ENCODE measurements at regions of chr9 and their contacts with region 1.

Region 1: DNA sequence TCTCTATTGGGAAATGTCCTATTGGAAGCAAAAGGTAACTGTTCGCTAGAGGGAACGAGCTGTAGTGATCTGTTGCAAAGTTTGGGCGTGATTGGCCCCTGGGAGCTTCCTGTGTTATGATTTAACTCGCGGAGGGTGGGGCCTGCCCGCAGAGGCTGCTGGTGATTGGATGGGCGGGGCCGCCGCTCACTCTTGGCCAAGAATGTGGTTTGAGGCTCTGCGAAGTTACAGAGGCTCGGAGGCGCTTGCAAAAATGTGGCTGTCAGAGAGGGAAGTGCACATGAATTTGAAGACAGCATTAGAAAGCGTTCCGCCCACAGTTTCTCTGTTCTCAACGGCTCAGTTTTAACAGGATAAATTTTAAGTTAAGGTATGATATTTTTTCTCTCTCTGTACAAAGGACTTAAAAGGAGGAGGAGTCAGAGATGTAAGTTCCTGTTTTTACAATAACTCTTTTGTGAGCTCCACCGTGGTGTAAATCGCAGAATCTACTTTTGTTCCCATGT is 46.9 kb downstream of the CNTRL start:
- DNase-seq: peak; percentile 97
- H3K4me3 Mint-ChIP-seq: peak overlapping the region; percentile 68
- H3K27ac Mint-ChIP-seq: peak overlapping the region; percentile 80
- H3K4me1 Mint-ChIP-seq: peaks cover 44% of the 10 kb centered on the region
- H3K27me3 Mint-ChIP-seq: no peaks in the 10 kb centered on the region

Region 2: DNA sequence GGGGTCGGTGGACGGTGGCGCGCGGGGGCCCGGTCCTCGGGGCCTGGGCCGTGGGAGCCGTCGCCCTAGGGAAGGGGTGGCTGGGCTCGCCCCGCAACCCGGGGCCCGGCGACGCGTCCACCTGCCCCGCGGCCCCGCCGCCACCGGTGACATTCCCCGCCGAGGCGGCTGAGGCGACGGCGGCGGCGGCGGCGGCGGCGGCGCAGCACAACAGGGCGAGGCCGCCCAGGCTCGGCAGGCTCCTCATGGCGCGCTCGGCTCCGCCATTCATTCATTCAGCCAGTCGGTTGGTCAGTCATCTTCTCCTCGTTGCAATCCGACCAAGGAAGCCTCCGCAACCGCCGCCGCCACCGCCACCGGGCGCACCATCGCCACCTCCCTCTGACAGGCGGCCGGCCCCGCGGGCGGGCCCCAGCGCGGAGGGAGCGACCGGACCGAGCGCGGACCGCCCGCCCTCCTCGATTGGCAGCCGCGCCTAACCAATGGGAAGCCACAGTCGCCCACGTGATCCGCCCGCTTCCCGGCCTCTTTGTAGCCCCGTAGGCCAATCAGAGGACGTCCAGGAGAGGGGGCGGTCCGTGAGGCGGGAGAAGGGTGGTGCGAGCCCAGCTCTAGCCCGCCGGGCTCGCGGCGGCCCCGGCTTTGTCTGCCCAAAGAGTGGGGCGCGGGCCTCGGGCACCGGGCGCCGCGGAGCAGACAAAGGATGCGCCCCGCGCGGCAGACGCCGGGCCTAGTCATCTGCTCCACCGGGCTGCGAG is 407.4 kb before region 1 on chr9 and contains the start of gene MEGF9:
- intact Hi-C with region 1: loop called (anchors 1 kb)
- DNase-seq: peak; percentile 96
- H3K4me3 Mint-ChIP-seq: peak within 1 kb of the TSS; percentile 87
- H3K27ac Mint-ChIP-seq: peak within 1 kb of the TSS; percentile 74
- H3K4me1 Mint-ChIP-seq: peaks cover 35% of the 10 kb centered on the region
- H3K27me3 Mint-ChIP-seq: no peaks in the 10 kb centered on the region
- total RNA-seq, gene MEGF9: 5.0 TPM in 2 replicates

Region 3: DNA sequence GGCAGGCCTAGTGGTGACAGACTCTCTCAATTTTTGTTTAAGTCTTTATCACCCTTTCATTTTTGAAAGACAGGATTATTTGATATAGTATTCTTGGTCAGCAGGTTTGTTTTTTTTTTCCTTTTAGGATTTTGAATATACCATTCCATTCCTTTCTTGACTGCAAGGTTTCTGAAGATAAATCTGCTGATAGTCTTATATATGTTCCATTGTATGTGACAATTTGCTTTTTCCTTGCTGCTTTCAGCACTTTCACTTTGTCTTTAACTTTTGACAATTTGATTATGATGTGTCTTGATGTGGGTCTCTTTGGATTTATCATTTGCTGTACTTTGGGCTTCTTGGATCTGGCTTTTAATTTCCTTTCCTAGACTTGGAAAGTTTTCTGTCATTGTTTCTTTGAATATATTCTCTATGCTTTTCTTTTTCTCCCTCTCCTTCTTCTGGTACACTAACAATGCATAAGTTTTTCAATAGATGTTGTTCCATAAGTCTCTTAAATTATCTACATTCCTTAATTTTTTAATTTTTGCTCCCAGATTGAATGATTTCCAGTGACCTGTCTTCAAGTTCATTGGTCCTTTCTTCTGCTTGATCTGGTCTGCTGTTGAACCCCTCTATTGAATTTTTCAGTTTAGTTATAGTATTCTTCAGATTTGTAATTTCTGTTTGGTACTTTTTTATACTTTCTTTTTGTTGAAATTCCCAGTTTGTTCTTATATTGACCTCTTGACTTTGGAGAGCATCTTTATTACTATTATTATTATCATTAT is 313.8 kb before region 1 on chr9:
- intact Hi-C with region 1: no loop called
- DNase-seq: no peak
- H3K4me3 Mint-ChIP-seq: no peak overlapping the region
- H3K27ac Mint-ChIP-seq: no peak overlapping the region
- H3K4me1 Mint-ChIP-seq: no peaks in the 10 kb centered on the region
- H3K27me3 Mint-ChIP-seq: no peaks in the 10 kb centered on the region

Region 4: DNA sequence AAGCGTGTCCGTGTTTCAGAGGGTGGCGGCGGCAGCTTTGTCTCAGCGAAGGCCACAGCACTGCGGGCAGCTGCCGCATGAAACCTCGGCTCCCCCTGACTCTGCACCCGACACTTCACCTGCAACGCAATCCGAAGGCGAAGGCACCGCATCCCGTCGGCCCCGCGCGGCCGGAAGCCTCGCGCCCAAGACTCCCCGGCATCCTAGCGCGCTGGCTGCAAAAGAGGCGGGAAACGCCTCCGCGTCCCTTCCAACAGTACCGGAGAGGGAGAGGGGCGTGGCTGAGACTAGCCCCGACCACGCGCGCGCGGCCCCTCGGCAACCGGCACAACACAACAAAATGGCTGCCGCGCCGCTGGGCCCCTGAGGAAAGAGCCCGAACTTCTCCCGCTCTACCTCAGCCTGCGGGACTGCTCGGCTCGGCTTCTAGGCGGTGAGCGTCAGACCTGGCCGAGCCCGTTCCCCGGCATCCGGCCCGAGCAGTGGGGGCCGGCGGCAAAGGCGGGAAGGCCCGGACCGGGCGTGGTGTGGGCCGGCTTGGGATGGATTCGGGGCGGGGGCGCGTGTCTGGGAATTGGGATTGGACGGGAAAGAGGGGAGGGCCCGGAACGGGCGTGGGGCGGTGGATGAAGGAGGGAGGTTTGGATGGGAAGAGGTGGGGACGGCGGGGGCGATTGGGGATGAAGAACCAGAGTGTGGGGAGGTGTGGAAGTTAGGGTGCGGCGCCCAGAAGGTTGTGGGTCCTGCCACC is 46.8 kb before region 1 on chr9 and contains the start of gene CNTRL:
- intact Hi-C with region 1: loop called (anchors 1 kb)
- DNase-seq: peak; percentile 90
- H3K4me3 Mint-ChIP-seq: peak within 1 kb of the TSS; percentile 100
- H3K27ac Mint-ChIP-seq: peak within 1 kb of the TSS; percentile 98
- H3K4me1 Mint-ChIP-seq: peaks cover 34% of the 10 kb centered on the region
- H3K27me3 Mint-ChIP-seq: no peaks in the 10 kb centered on the region
- total RNA-seq, gene CNTRL: 67.6 and 68.4 TPM in 2 replicates

Region 5: DNA sequence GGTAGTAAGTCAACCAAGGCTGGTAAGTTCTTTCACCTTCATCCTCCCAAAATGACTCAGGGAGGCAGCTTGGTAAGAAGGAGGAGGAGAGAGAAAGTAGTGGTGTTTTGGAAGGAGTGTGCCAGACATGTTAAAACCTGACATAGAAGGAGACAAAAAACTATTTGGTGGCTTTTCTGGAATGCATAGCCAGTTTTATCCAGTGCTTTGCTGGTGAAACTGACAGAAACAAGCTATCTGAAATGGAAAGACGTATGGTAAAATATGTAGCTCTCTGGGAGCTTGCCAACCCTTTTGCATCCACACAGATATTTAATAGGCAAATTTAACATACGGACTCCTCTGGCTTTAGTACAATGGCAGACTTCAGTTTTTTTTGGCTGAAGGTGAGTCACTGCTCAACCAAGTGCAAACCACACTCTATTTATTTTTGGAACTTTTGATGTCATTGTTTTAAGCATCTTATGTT is 34.7 kb after region 1 on chr9:
- intact Hi-C with region 1: loop called (anchors 5 kb)
- DNase-seq: no peak
- H3K4me3 Mint-ChIP-seq: no peak overlapping the region
- H3K27ac Mint-ChIP-seq: peak overlapping the region; percentile 87
- H3K4me1 Mint-ChIP-seq: peaks cover 30% of the 10 kb centered on the region
- H3K27me3 Mint-ChIP-seq: no peaks in the 10 kb centered on the region

Region 6: DNA sequence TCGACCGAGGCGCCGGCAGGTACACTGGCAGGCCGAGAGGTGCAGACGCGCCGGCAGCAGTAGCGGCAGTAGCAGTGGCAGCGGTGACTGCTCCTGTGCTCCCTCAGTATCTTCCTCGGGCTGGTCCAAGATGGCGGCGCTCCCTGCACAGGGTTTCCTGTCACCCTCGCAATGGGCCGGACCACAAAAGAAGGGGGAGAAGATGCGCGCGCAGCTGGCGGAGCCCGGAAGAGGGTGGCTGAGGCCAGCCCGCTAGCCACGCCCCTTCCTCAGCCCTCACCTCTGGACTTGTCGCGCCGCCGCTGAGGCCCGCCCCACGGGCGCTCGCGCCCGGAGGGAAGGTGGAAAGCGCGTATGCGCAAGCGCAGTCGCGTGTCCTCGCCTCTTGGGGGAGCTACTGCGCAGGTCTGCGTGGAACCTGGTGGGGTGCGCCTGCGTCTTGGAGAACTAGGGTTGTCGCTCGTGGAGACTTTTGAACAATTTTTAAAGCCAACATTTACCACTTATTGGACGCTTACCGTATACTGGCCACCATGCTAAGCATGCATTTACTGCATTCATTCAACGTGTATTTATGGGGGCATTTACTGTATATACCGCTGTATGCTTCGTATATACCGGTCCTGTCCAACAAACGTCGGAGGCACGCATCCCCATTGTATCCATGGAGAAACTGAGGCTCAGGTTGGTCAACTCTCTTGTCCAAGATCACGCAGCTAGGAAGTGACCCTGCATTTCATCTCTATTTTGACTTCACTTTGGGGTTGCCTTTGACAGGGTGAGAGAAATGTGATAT is 80.3 kb after region 1 on chr9 and contains the start of gene RAB14:
- intact Hi-C with region 1: loop called (anchors 1 kb)
- DNase-seq: peak; percentile 100
- H3K4me3 Mint-ChIP-seq: peak within 1 kb of the TSS; percentile 96
- H3K27ac Mint-ChIP-seq: peak within 1 kb of the TSS; percentile 87
- H3K4me1 Mint-ChIP-seq: peaks cover 46% of the 10 kb centered on the region
- H3K27me3 Mint-ChIP-seq: no peaks in the 10 kb centered on the region
- total RNA-seq, gene RAB14: 62.0 and 63.2 TPM in 2 replicates

Measured in activated T-helper 2 cell treated with anti-CD3 and anti-CD28 coated beads, Interferon-gamma antibody, Interleukin-2, Interleukin-4, amounts not matched to agents 10 μg/mL and 5 μg/mL and 100 μg/mL, durations not matched to agents 14 hours and 24 hours and 36 hours (primary cell).